Activated CD8-positive, alpha-beta memory T cell treated with anti-CD3 and anti-CD28 coated beads, Interleukin-2, amount 10 ng/mL, durations not matched to agents 7 days and 5 days (primary cell): ENCODE measurements at regions of chr17 and their contacts with region 1.

Region 1: DNA sequence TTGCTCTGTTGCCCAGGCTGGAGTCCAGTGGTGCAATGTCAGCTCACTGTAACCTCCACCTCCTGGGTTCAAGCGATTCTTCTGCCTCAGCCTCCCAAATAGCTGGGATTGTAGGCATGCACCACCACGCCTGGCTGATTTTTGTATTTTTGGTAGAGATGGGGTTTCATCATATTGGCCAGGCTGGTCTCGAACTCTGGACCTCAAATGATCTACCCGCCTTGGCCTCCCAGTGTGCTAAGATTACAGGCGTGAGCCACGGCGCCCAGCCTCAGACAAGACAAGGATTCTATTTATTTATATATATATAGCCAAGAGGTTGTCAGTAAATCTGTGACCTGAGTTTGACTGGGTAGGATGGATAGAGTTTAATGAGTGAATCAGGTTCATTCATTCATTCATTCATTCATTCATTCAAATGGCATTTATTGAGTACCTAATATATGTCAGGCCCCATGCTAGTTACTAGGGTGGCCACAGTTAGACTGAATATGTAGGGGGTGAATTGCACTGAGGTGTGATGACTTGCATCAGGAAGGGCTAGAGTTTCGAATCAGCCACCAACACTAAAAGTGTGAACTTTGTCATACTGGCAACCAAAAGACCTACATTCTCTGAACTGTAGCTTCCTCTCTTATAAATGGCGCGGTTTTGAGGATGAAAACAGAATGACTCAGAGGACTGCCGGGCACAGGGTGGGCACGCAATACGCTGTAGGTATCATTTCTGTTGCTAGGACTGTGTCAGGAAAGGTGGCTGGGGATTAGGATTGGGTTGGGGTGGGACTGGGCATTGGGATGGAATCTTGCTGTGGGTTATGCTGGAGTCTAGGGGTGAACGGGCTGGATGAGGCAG is 37.8 kb downstream of the ITGAE start:
- DNase-seq: peak; percentile 86
- ATAC-seq: peak; percentile 73
- H3K4me3 Mint-ChIP-seq: peak overlapping the region; percentile 65
- H3K27ac Mint-ChIP-seq: peak overlapping the region; percentile 96
- H3K4me1 Mint-ChIP-seq: peaks cover 73% of the 10 kb centered on the region
- H3K27me3 Mint-ChIP-seq: no peaks in the 10 kb centered on the region

Region 2: GRCh38 chr17:3558603-3559269 is 204.4 kb before region 1 on chr17:
- CTCF ChIA-PET with region 1: no interaction called
- DNase-seq: peak; percentile 73
- ATAC-seq: peak; percentile 74
- H3K4me3 Mint-ChIP-seq: no peak overlapping the region
- H3K27ac Mint-ChIP-seq: peak overlapping the region; percentile 64
- H3K4me1 Mint-ChIP-seq: peaks cover 25% of the 10 kb centered on the region
- H3K27me3 Mint-ChIP-seq: no peaks in the 10 kb centered on the region

Region 3: GRCh38 chr17:3750926-3751325 is 12.2 kb before region 1 on chr17:
- CTCF ChIA-PET with region 1: interaction called, 11 read pairs
- DNase-seq: peak; percentile 87
- ATAC-seq: peak; percentile 76
- H3K4me3 Mint-ChIP-seq: peak overlapping the region; percentile 66
- H3K27ac Mint-ChIP-seq: peak overlapping the region; percentile 90
- H3K4me1 Mint-ChIP-seq: peaks cover 46% of the 10 kb centered on the region
- H3K27me3 Mint-ChIP-seq: no peaks in the 10 kb centered on the region

Region 4: GRCh38 chr17:3796110-3796821 is 33.1 kb after region 1 on chr17:
- CTCF ChIA-PET with region 1: interaction called, 16 read pairs
- DNase-seq: peak; percentile 99
- ATAC-seq: peak; percentile 64
- H3K4me3 Mint-ChIP-seq: peak overlapping the region; percentile 81
- H3K27ac Mint-ChIP-seq: peak overlapping the region; percentile 86
- H3K4me1 Mint-ChIP-seq: peaks cover 85% of the 10 kb centered on the region
- H3K27me3 Mint-ChIP-seq: peaks cover 6% of the 10 kb centered on the region